Esophagus muscularis mucosa (tissue), 4 donors: ENCODE measurements at regions of chr1 and their contacts with region 1.

Region 1: DNA sequence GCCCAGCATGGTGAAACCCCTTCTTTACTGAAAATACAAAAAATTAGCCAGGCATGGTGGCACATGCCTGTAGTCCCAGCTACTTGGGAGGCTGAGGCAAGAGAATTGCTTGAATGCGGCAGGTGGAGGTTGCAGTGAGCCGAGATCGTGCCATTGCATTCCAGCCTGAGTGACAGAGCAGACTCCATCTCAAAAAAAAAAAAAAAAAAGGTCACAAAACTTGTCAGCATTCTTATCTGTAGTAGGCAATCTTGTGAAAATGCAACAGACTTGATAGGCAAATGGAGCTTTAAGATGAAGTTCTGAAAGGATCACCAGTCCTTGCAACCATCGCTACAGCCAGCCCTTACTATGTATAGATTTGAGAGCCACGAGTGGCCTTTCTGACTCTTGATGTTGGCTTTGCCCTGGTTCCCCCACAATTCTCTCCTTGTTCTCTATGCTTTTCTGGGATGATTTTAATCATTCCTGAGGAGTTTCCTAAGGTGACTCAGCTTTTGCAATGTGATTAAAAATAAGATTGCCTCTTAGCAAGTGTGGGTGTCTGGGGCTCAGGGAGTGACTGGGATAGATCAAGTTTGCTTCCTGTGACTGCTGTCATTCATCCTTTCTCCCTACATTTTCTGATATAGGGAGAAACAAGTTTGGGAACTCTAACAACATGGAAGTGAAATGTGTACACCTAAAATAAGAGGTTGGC is 7.1 kb upstream of the MAP1LC3C start:
- DNase-seq: no peak
- H3K4me3 ChIP-seq: no peak overlapping the region
- H3K27ac ChIP-seq: no peak overlapping the region
- H3K4me1 ChIP-seq: peaks cover 0 to 4% (median 0%) of the 10 kb centered on the region in 4 donors
- H3K27me3 ChIP-seq: peaks cover 0 to 7% (median 0%) of the 10 kb centered on the region in 4 donors
- CTCF ChIP-seq: no peak
- EP300 ChIP-seq: no peak
- POLR2A ChIP-seq: no peak

Region 2: DNA sequence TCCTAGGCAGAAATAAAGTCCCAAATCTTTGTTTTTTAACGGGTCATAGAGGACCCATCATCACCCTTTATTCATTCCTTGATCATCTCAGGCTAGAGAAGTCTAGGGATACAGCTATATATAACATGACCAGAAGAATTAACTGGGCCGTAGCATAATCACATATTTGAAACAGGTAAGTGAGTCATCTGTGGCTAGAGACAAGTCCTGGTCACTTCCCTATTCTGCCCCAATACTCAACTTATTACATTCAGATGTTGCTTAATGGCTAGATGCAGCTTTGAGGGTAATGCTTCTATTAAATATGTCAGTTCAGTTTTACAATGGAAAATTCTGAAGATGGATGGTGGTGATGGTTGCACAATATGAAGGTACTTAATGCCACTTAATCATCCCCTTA is 111.0 kb before region 1 on chr1:
- intact Hi-C with region 1: loop called (anchors 5 kb)
- DNase-seq: no peak
- H3K4me3 ChIP-seq: no peak overlapping the region
- H3K27ac ChIP-seq: no peak overlapping the region
- H3K4me1 ChIP-seq: no peaks in the 10 kb centered on the region
- H3K27me3 ChIP-seq: no peaks in the 10 kb centered on the region
- CTCF ChIP-seq: no peak
- EP300 ChIP-seq: no peak
- POLR2A ChIP-seq: no peak